HEK293 (cell line): ENCODE measurements at regions of chr6 and their contacts with region 1.

Region 1: GRCh38 chr6:143337201-143337949 is 113.1 kb downstream of the ADAT2 start:
- H3K4me3 ChIP-seq: no peak overlapping the region
- H3K27ac ChIP-seq: no peak overlapping the region
- H3K4me1 ChIP-seq: 0 out of 2 replicates have a peak, but pooled peaks cover 3% of the 10 kb centered on the region
- CTCF ChIP-seq: no peak

Region 2: GRCh38 chr6:143348531-143348930 is 11.2 kb after region 1 on chr6:
- CTCF ChIA-PET with region 1: interaction called, 13 read pairs
- POLR2A ChIA-PET with region 1: no interaction called
- H3K4me3 ChIP-seq: no peak overlapping the region
- H3K27ac ChIP-seq: no peak overlapping the region
- H3K4me1 ChIP-seq: no peaks in the 10 kb centered on the region
- CTCF ChIP-seq: no peak